Activated B cell treated with CpG ODN at 0.5 μM for 24 hours (primary cell): ENCODE measurements at regions of chr4 and their contacts with region 1.

Region 1: GRCh38 chr4:16264798-16265197 is 38.5 kb upstream of the TAPT1 start:
- DNase-seq: no peak
- ATAC-seq: peak; percentile 62
- H3K4me3 Mint-ChIP-seq: no peak overlapping the region
- H3K27ac Mint-ChIP-seq: no peak overlapping the region
- H3K4me1 Mint-ChIP-seq: peaks cover 44% of the 10 kb centered on the region
- H3K27me3 Mint-ChIP-seq: no peaks in the 10 kb centered on the region
- CTCF ChIP-seq: no peak

Region 2: DNA sequence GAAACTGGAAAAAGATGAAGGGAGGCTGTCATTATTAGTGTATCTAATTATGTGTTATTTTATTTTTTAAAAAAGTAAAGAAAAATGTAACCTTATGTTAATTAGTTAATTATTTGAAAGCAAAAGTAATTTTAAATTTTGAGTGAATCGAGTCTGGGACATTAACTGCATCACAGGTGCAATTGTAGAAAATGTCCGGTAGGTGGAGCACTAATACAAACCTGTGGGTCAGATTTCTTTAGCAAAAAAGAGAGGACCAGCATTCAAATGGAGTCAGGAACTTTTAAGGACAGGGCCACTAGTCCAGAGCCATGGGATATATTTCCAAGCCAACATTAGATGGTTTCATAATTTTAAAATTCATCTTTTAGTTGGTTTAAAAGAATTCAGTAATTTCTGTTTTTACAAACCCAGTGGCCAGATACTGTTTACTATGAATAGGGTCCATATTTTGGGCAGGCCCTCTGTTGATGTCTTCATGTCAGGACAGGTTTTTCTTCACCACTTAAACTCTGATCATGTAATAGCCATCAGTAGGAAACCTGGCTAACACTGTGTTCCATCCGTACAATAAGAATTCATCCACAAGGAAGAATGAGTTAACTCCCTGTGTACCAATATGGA is 534.8 kb before region 1 on chr4:
- CTCF ChIA-PET with region 1: no interaction called
- POLR2A ChIA-PET with region 1: no interaction called
- intact Hi-C with region 1: loop called (anchors 2 kb)
- DNase-seq: no peak
- ATAC-seq: no peak
- H3K4me3 Mint-ChIP-seq: no peak overlapping the region
- H3K27ac Mint-ChIP-seq: no peak overlapping the region
- H3K4me1 Mint-ChIP-seq: no peaks in the 10 kb centered on the region
- H3K27me3 Mint-ChIP-seq: no peaks in the 10 kb centered on the region
- CTCF ChIP-seq: peak; percentile 45

Region 3: GRCh38 chr4:15882675-15883086 is 382.1 kb before region 1 on chr4:
- CTCF ChIA-PET with region 1: interaction called, 12 read pairs
- POLR2A ChIA-PET with region 1: no interaction called
- intact Hi-C with region 1: loop called (anchors 1 kb)
- DNase-seq: no peak
- ATAC-seq: peak; percentile 82
- H3K4me3 Mint-ChIP-seq: no peak overlapping the region
- H3K27ac Mint-ChIP-seq: no peak overlapping the region
- H3K4me1 Mint-ChIP-seq: peaks cover 2% of the 10 kb centered on the region
- H3K27me3 Mint-ChIP-seq: peaks cover 2% of the 10 kb centered on the region
- CTCF ChIP-seq: peak; percentile 85

Region 4: GRCh38 chr4:16019649-16020048 is 245.1 kb before region 1 on chr4:
- CTCF ChIA-PET with region 1: interaction called, 15 read pairs
- POLR2A ChIA-PET with region 1: no interaction called
- intact Hi-C with region 1: no loop called
- DNase-seq: no peak
- ATAC-seq: no peak
- H3K4me3 Mint-ChIP-seq: no peak overlapping the region
- H3K27ac Mint-ChIP-seq: no peak overlapping the region
- H3K4me1 Mint-ChIP-seq: no peaks in the 10 kb centered on the region
- H3K27me3 Mint-ChIP-seq: no peaks in the 10 kb centered on the region
- CTCF ChIP-seq: no peak

Region 5: DNA sequence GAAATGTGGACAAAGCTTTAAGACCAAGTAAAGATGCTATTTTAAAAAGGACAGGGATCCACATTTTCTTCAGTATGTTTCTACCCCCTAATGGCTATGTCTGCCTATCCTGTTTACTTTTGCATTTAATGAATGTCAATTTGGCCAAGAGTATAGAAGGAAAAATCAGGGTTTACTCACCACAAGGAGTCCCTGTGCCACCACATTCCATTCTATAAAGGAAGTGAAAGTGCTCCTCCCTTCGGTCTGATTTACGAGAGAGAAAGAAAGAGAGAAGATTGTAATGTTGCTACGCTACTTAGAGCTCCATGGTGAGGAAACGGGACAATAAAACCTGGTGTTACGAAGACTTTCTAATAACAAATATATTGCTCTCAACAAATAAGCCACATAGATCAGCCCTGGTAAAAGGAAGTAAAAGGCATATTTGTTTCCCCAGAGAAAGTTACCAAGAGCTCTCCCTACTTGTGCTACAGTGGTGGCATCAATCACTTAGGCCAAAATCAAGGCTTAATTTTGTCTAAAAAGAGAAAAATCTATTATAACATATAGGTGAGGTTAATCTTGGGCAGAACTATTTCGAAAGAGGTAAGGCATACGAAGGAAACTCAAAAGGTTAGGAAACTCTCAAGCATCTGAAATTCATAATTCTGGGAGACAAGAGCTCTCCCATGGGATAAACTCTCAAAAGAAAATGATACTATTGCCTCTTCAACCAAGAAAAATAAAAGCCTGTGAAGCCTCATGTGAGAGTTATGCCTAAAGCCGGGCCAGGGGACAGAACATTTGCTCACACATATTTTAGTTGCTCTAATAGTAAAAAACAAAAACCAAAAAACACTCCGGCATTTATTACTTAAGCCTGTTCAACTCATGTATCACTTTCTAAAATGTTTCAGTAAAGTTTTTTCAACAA is 68.1 kb before region 1 on chr4:
- CTCF ChIA-PET with region 1: interaction called, 45 read pairs
- POLR2A ChIA-PET with region 1: no interaction called
- intact Hi-C with region 1: loop called (anchors 1 kb)
- DNase-seq: no peak
- ATAC-seq: peak; percentile 86
- H3K4me3 Mint-ChIP-seq: peak overlapping the region; percentile 66
- H3K27ac Mint-ChIP-seq: peak overlapping the region; percentile 73
- H3K4me1 Mint-ChIP-seq: peaks cover 25% of the 10 kb centered on the region
- H3K27me3 Mint-ChIP-seq: no peaks in the 10 kb centered on the region
- CTCF ChIP-seq: no peak